Left cardiac atrium (tissue), 4 donors: ENCODE measurements at regions of chr2 and their contacts with region 1.

Region 1: DNA sequence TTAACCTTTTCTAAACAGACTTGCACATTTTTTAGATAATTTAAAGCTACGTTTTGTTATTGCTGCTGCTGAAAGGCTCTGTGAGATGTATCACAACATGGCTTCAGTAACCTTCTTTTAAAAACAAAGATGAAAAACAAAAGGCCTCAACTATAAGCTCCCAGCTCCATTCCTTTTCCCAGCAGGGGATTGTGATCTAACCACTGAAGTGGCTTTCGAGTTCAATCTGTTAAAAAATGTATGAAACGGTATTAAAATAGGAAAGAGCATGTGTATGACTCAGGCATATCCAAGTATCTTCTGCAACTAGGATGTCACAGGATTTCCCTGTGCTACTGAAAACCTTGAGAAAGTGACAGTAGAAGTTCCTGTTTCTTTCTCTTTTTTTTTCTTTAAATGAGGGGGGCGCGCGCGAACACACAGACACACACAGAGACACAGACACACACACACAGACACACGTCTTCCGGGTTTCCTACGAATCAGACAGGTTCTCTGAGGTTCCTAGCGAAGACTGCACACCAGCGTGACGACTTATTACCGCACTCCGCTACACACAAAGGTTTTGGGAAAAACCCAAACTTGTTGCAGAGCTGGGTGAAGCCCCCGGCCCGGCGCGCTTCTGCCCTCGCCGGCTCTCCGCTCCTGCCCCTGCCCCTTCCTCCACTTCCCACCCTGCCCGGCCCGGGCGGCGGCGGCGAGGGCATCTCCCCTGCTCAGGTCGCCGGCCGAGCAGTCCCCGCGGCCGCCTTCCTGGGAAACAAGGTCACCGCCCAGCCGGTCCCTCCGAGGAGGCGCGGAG is 86.8 kb downstream of the RBMS1 start:
- DNase-seq: peak; percentile 59
- ATAC-seq: peak; percentile 24 to 54

Region 2: GRCh38 chr2:159695795-159696448 is 710.9 kb before region 1 on chr2:
- intact Hi-C with region 1: no loop called
- DNase-seq: no peak
- ATAC-seq: no peak

Region 3: GRCh38 chr2:160269803-160270570 is 136.8 kb before region 1 on chr2:
- intact Hi-C with region 1: loop called in 1 of 2 experiments (anchors 5 kb)
- DNase-seq: peak; percentile 90
- ATAC-seq: peak; percentile 91 to 92

Region 4: GRCh38 chr2:160332318-160332717 is 74.5 kb before region 1 on chr2:
- intact Hi-C with region 1: loop called (anchors 10 kb)
- DNase-seq: no peak
- ATAC-seq: peak; percentile 69 to 70

Region 5: DNA sequence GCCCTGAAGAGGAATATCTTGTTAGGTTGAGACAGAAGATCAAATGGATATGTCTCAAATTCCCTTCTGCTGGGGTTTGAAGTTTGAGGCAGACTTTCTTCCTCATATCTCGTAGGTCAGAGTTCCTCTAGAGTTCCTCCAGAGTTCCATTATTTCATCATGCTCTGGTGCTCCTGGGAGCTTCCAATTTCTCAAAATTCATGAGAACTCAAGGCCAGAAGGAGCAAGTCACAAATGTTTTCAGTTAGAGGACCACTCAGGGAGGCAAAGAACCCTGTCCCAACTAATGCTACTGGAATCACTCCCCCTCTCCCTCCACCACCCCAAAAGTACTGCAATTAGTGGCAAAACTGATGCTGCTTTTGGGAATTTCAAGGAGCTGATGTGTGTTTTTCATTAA is 202.6 kb after region 1 on chr2:
- intact Hi-C with region 1: no loop called
- DNase-seq: no peak
- ATAC-seq: peak in 1 of 2 donors; percentile 27